ENCODE measurements at regions of chr9 and their contacts with region 1.

Region 1: DNA sequence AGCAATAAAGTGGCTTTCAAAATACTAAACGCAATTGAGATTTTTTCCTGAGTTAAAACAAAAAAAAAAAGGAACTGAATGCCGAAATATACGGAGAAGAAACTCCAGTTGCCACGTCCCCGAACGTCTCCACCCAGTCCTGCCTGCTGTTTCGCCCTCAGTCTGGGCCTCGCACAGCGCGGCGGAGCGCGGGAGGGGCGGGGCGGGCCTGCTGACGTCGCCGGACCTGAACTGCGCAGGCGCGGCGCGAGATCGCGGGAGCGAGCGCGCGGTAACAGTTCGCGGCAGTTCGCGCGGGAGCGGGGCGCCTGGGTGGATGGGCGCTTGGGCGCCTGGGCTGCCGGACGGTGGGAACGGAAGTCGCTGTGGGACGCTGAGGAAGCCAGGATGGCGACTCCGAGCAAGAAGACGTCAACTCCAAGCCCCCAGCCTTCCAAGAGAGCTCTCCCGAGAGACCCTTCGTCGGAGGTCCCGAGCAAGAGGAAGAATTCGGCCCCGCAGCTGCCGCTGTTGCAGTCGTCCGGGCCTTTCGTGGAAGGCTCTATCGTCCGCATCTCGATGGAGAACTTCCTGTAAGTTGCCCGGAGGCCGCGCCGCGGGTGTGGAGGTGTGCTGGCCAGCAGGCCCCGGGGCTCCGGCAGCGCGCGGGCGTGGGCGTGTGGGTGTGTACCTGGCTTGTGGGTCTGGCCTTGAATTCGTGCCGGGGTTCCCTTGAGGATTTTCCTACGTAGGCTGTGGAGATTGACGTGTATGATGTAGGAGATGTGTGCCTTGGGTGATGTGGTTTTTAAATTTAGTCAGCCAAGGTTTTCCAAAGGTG is at the start of gene SMC5:
- DNase-seq: peak; percentile 79 to 97 (median 88)
- ATAC-seq: peak; percentile 81
- H3K4me3 ChIP-seq: peak within 1 kb of the TSS; percentile 89
- H3K4me3 Mint-ChIP-seq: peak within 1 kb of the TSS; percentile 93
- H3K27ac ChIP-seq: peak within 1 kb of the TSS; percentile 89 to 94
- H3K27ac Mint-ChIP-seq: peak within 1 kb of the TSS; percentile 96
- H3K4me1 ChIP-seq: peaks cover 44% of the 10 kb centered on the region
- H3K4me1 Mint-ChIP-seq: peaks cover 61% of the 10 kb centered on the region
- H3K27me3 ChIP-seq: no peaks in the 10 kb centered on the region
- H3K27me3 Mint-ChIP-seq: no peaks in the 10 kb centered on the region
- CTCF ChIP-seq: no peak
- total RNA-seq, gene SMC5: 37.7 to 38.1 TPM

Region 2: GRCh38 chr9:69759421-69760277 is 499.3 kb before region 1 on chr9 and contains the start of gene PTAR1:
- CTCF ChIA-PET with region 1: no interaction called
- POLR2A ChIA-PET with region 1: interaction called, 6 read pairs
- intact Hi-C with region 1: loop called (anchors 5 kb)
- DNase-seq: peak; percentile 78 to 96 (median 89)
- ATAC-seq: peak; percentile 82
- H3K4me3 ChIP-seq: peak within 1 kb of the TSS; percentile 87
- H3K4me3 Mint-ChIP-seq: peak within 1 kb of the TSS; percentile 98
- H3K27ac ChIP-seq: peak within 1 kb of the TSS; percentile 77 to 85
- H3K27ac Mint-ChIP-seq: peak within 1 kb of the TSS; percentile 93
- H3K4me1 ChIP-seq: peaks cover 9% of the 10 kb centered on the region
- H3K4me1 Mint-ChIP-seq: peaks cover 47% of the 10 kb centered on the region
- H3K27me3 ChIP-seq: no peaks in the 10 kb centered on the region
- H3K27me3 Mint-ChIP-seq: no peaks in the 10 kb centered on the region
- CTCF ChIP-seq: no peak
- total RNA-seq, gene PTAR1: 65.9 to 67.1 TPM

Region 3: GRCh38 chr9:70340572-70340971 is 81.7 kb after region 1 on chr9:
- CTCF ChIA-PET with region 1: no interaction called
- POLR2A ChIA-PET with region 1: no interaction called
- intact Hi-C with region 1: no loop called
- DNase-seq: peak in 3 of 14 experiments; percentile 38 to 52 (median 42)
- ATAC-seq: no peak
- H3K4me3 ChIP-seq: no peak overlapping the region
- H3K4me3 Mint-ChIP-seq: no peak overlapping the region
- H3K27ac ChIP-seq: no peak overlapping the region
- H3K27ac Mint-ChIP-seq: no peak overlapping the region
- H3K4me1 ChIP-seq: no peaks in the 10 kb centered on the region
- H3K4me1 Mint-ChIP-seq: peaks cover 7% of the 10 kb centered on the region
- H3K27me3 ChIP-seq: no peaks in the 10 kb centered on the region
- H3K27me3 Mint-ChIP-seq: no peaks in the 10 kb centered on the region
- CTCF ChIP-seq: peak; percentile 66

Region 4: GRCh38 chr9:70563431-70564204 is 304.7 kb after region 1 on chr9:
- CTCF ChIA-PET with region 1: no interaction called
- POLR2A ChIA-PET with region 1: no interaction called
- intact Hi-C with region 1: loop called in 1 of 2 experiments (anchors 10 kb)
- DNase-seq: peak; percentile 7 to 83 (median 37)
- ATAC-seq: peak; percentile 93
- H3K4me3 ChIP-seq: peak overlapping the region; percentile 23
- H3K4me3 Mint-ChIP-seq: peak overlapping the region; percentile 67
- H3K27ac ChIP-seq: peak overlapping the region; percentile 57 to 72
- H3K27ac Mint-ChIP-seq: peak overlapping the region; percentile 86
- H3K4me1 ChIP-seq: peaks cover 30% of the 10 kb centered on the region
- H3K4me1 Mint-ChIP-seq: peaks cover 52% of the 10 kb centered on the region
- H3K27me3 ChIP-seq: no peaks in the 10 kb centered on the region
- H3K27me3 Mint-ChIP-seq: no peaks in the 10 kb centered on the region
- CTCF ChIP-seq: no peak